ENCODE measurements at regions of chr20 and their contacts with region 1.

Region 1: DNA sequence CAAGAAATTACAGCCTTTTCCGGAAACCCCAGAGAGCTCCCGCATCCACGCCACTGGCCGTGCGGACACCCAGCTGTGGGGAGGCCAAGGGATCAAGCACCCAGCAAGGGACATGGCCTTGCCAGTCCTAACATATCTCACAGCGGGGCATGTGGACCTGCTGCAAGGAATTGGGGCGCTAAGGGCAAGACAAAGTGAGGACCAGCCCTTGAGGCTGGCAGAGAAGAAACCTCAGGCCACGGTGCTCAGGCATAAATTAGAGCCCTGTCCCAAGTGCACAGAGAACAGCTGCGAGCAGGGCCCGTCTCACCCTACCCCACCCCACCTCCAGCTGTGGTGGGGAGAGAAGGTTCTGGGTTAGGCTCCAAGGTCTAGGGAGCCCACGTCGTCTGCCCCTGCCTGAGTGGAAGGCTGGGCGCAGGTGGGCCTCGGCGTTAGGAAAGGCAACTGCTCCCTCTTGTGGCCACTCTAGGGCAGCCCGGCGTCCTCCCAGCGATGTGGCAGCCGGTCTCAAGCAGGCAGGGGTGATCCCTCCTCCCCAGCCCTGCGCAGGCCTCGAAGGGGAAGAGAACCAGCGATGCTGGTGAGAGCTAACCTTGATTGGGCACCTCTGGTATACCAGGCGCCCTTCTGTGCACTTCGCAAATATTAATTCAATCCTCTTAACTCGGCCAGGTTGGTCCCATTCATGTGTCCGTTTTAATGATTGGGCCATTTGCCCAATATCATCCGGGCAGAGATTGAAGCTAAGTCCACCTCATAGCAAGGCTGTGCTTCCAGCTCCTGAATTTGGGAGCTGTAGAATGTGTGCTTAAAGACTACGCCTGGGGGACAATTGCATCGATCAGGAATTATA is 235.8 kb downstream of the NFATC2 start:
- DNase-seq: peak; percentile 81
- H3K4me3 Mint-ChIP-seq: no peak overlapping the region
- H3K27ac Mint-ChIP-seq: no peak overlapping the region
- H3K4me1 Mint-ChIP-seq: no peaks in the 10 kb centered on the region
- H3K27me3 Mint-ChIP-seq: peaks cover 6% of the 10 kb centered on the region

Region 2: GRCh38 chr20:50395258-50395729 is 911.4 kb before region 1 on chr20:
- CTCF ChIA-PET with region 1: no interaction called
- POLR2A ChIA-PET with region 1: no interaction called
- intact Hi-C with region 1: no loop called
- DNase-seq: no peak
- H3K4me3 Mint-ChIP-seq: no peak overlapping the region
- H3K27ac Mint-ChIP-seq: no peak overlapping the region
- H3K4me1 Mint-ChIP-seq: peaks cover 6% of the 10 kb centered on the region
- H3K27me3 Mint-ChIP-seq: peaks cover 2% of the 10 kb centered on the region

Region 3: DNA sequence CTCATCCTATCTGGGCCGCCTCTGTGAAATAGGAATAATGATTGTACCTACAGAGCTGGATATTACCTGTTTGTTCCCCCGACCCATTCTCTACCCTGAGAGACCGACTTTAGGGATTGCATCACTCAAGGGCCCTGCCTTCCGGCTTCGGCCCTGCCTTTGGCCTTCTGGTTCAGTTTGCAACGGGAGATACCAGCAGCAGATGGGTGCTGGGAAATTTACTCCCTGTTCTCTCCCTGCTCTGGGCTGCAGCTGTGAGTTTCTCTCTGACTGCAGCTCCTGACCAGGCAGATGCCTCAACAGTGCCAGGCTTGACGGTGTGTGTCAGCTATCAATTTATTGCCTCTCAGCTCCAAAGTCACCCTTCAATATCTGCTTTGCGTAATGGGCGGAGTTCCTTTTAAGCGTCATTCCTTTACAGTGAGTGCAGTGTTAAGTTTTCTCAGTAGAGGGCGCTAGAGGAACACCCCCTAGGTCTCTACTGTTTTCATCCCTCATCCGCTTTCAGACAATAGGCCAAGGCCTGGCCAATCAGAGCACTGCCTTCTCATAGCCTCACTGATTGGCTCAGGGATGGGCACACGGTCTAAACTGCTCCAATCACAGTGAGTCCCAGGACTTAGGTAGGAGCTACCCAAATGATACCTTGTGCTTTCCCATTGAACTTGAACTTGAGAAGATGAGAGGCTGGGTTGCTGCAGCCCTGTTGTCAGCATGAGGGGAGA is 313.8 kb before region 1 on chr20:
- CTCF ChIA-PET with region 1: interaction called, 397 read pairs
- POLR2A ChIA-PET with region 1: interaction called, 3 read pairs
- intact Hi-C with region 1: loop called (anchors 1 kb)
- DNase-seq: peak; percentile 68
- H3K4me3 Mint-ChIP-seq: no peak overlapping the region
- H3K27ac Mint-ChIP-seq: no peak overlapping the region
- H3K4me1 Mint-ChIP-seq: no peaks in the 10 kb centered on the region
- H3K27me3 Mint-ChIP-seq: no peaks in the 10 kb centered on the region

Region 4: DNA sequence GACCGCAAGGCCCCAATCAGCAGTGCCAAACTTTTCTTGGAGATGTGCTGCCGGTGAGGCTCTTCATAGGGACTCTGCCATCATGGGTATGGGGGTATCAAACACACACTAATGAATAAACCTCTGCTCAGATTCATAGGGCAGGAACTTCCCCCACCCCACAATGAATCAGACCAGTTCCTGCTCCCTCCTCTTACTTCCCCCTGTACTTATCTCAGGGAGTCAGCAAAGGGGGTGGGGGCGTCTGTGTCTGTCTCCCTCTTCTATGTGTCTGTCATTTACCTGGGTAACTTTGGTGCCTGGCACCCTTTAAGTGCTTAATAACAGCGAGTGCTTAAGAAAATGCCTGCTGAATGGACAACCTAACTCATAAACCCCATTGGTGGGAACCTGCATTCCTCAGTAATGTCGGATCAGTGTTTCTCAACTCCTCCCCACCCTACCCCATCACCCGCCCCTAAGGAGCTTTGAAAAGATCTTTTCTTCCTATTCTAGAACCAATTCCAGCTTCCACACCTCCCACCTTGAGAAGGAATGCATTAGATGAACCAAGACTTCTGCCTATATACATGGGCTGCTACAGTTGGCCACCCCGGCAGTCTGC is 285.2 kb before region 1 on chr20:
- CTCF ChIA-PET with region 1: no interaction called
- POLR2A ChIA-PET with region 1: no interaction called
- intact Hi-C with region 1: no loop called
- DNase-seq: no peak
- H3K4me3 Mint-ChIP-seq: peak overlapping the region; percentile 10
- H3K27ac Mint-ChIP-seq: no peak overlapping the region
- H3K4me1 Mint-ChIP-seq: peaks cover 4% of the 10 kb centered on the region
- H3K27me3 Mint-ChIP-seq: peaks cover 55% of the 10 kb centered on the region

Region 5: DNA sequence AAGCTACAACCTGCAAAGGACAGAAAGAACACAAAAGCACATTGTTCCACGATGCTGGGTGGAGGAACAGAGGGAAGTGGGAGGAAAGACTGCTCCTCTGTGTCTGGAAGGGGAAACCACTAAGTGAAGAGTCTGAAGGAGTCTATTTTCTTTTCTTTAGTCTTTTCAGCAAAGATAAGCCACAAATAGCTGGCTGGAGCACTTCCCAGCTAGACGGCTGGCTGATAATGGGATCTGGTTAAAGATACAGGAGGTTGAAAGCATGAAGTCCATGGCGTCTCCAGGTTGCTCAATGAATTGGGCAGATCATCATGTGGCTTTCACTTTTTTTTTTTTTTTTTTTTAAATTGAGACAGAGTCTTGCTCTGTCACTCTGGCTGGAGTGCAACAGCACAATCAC is 129.9 kb before region 1 on chr20:
- CTCF ChIA-PET with region 1: no interaction called
- POLR2A ChIA-PET with region 1: no interaction called
- intact Hi-C with region 1: no loop called
- DNase-seq: no peak
- H3K4me3 Mint-ChIP-seq: no peak overlapping the region
- H3K27ac Mint-ChIP-seq: no peak overlapping the region
- H3K4me1 Mint-ChIP-seq: no peaks in the 10 kb centered on the region
- H3K27me3 Mint-ChIP-seq: peaks cover 22% of the 10 kb centered on the region

Region 6: GRCh38 chr20:51220293-51220706 is 86.4 kb before region 1 on chr20:
- CTCF ChIA-PET with region 1: interaction called, 10 read pairs
- POLR2A ChIA-PET with region 1: no interaction called
- intact Hi-C with region 1: loop called (anchors 2 kb)
- DNase-seq: peak; percentile 74
- H3K4me3 Mint-ChIP-seq: no peak overlapping the region
- H3K27ac Mint-ChIP-seq: no peak overlapping the region
- H3K4me1 Mint-ChIP-seq: peaks cover 12% of the 10 kb centered on the region
- H3K27me3 Mint-ChIP-seq: peaks cover 44% of the 10 kb centered on the region

Region 7: DNA sequence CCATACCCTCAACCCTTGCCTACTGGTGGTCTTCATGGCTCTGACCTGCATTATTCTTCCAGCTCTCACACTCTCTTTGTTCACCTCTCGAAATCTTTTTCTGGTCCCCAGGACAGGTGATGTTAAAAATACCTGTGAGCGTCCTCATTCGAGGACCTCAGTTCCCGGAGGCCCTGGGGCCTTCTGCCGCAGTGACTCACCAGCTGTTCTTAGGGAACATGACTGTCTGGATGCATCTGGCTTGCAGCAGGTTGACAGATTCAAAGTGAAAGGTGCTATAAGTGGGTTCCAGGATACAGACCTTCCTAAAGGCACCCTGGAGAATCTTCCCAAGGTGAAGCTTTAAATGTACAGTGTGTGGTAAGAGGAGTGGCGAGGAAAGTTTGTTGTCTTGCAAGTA is 73.4 kb before region 1 on chr20:
- CTCF ChIA-PET with region 1: no interaction called
- POLR2A ChIA-PET with region 1: no interaction called
- intact Hi-C with region 1: no loop called
- DNase-seq: no peak
- H3K4me3 Mint-ChIP-seq: no peak overlapping the region
- H3K27ac Mint-ChIP-seq: no peak overlapping the region
- H3K4me1 Mint-ChIP-seq: no peaks in the 10 kb centered on the region
- H3K27me3 Mint-ChIP-seq: peaks cover 21% of the 10 kb centered on the region

Region 8: DNA sequence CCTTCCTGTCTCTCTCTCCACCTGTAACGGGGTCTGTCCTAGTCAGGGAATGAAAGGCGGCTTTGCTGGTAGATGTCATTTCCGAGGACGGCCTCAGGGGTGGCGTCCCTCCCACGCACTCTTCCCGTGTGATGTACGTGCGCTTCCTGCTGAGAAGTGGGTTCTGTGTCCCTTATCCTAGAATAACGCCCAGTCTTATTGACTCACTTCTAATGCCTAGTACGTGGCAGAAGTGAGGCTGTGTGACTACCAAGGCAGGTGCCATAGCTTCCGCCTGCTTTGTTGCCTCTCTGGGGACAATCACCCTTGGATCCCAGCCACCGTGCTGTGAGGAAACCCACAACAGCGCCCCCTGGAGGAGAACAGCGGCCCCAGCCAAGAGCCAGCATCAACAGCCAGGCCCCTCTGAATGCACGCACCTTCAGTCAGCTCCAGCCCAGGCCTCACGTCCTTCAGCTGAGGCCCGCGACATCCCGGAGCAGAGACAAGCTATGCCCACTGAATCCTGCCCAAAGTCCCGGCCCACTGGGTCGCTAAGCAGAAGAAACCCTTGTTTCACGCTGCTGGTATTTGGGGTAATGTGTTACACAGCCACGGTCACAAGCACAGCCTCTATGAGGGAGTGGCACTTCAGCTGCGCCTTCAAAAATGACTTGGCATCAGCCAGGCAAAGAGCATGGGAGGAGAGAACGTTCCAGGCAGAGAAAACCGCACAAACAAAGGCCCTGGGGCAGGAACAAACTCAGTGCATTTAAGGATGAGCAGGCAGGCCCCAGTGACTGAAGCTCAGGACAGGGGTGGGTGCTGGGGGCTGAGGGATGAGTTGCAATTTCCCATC is 11.5 kb after region 1 on chr20:
- CTCF ChIA-PET with region 1: interaction called, 28 read pairs
- POLR2A ChIA-PET with region 1: interaction called, 3 read pairs
- intact Hi-C with region 1: no loop called
- DNase-seq: peak; percentile 76
- H3K4me3 Mint-ChIP-seq: no peak overlapping the region
- H3K27ac Mint-ChIP-seq: no peak overlapping the region
- H3K4me1 Mint-ChIP-seq: peaks cover 2% of the 10 kb centered on the region
- H3K27me3 Mint-ChIP-seq: no peaks in the 10 kb centered on the region

Region 9: DNA sequence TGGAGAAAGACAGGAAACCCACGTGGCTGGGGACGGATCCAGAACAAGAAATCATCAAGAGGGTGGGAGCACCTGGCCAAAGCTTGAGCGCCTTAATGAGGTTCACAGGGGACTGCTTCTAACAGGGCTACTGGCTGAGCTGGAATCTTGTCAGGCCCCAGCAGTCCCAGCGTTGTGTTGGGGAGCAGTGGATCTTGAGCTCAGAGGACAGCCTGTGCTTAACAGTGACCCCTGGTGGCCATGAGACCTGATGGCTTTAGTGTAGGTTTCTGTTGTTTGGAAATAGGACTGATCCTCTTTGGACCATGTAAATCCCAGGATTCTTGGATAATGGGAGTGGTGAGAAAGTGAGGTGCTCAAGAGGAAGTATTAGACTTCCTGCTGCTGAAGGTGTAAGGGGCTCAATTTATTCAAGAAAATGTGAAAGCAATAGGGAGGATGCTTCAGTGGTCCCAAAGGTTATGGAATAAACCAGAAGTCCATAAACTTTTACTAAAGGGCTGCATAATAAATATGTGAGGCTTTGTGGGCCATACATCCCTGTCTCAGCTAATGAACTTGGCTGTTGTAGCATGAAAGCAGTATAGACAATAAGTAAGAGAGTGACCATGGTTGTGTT is 19.6 kb after region 1 on chr20:
- CTCF ChIA-PET with region 1: interaction called, 45 read pairs
- POLR2A ChIA-PET with region 1: no interaction called
- intact Hi-C with region 1: no loop called
- DNase-seq: peak; percentile 51
- H3K4me3 Mint-ChIP-seq: no peak overlapping the region
- H3K27ac Mint-ChIP-seq: no peak overlapping the region
- H3K4me1 Mint-ChIP-seq: no peaks in the 10 kb centered on the region
- H3K27me3 Mint-ChIP-seq: peaks cover 2% of the 10 kb centered on the region